ENCODE measurements at regions of chr4 and their contacts with region 1.

Region 1: DNA sequence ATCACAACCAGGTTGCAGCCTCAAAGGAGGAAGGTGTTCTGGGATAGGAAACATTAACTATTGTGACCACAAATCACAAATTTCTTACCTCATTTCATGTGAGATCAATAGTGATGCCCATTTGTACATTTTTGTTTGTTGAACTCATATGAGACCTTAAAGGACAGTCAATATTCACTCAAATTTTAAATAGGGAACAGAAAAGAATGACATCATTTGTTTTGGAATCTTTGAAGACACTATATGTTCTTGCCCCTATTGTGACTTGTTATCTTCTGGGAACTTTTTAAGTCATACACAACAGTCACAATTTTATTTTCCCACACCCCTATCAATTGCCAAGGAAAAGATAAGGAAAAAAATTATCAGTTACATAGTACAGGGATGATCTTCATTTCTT is 346.5 kb downstream of the ARAP2 start:
- DNase-seq: no peak
- ATAC-seq: peak; percentile 29; the same call in 2 of the 3 replicates
- H3K4me3 ChIP-seq: no peak overlapping the region
- H3K27ac ChIP-seq: no peak overlapping the region
- H3K4me1 ChIP-seq: no peaks in the 10 kb centered on the region
- H3K27me3 ChIP-seq: no peaks in the 10 kb centered on the region
- CTCF ChIP-seq: no peak
- EP300 ChIP-seq: no peak
- POLR2A ChIP-seq: no peak
- RAD21 ChIP-seq: no peak

Region 2: GRCh38 chr4:35884714-35885480 is 12.9 kb before region 1 on chr4:
- CTCF ChIA-PET with region 1: interaction called, 4 read pairs
- POLR2A ChIA-PET with region 1: no interaction called
- RAD21 ChIA-PET with region 1: no interaction called
- SMC1A ChIA-PET with region 1: interaction called, 21 read pairs
- in situ Hi-C with region 1: no loop called
- intact Hi-C with region 1: no loop called
- DNase-seq: no peak
- ATAC-seq: no peak
- H3K4me3 ChIP-seq: no peak overlapping the region
- H3K27ac ChIP-seq: no peak overlapping the region
- H3K4me1 ChIP-seq: no peaks in the 10 kb centered on the region
- H3K27me3 ChIP-seq: no peaks in the 10 kb centered on the region
- CTCF ChIP-seq: no peak
- EP300 ChIP-seq: no peak
- POLR2A ChIP-seq: no peak
- RAD21 ChIP-seq: no peak

Region 3: GRCh38 chr4:35925806-35926205 is 28.0 kb after region 1 on chr4:
- CTCF ChIA-PET with region 1: no interaction called
- POLR2A ChIA-PET with region 1: no interaction called
- RAD21 ChIA-PET with region 1: no interaction called
- SMC1A ChIA-PET with region 1: no interaction called
- in situ Hi-C with region 1: no loop called
- intact Hi-C with region 1: no loop called
- DNase-seq: no peak
- ATAC-seq: peak; percentile 95
- H3K4me3 ChIP-seq: no peak overlapping the region
- H3K27ac ChIP-seq: no peak overlapping the region
- H3K4me1 ChIP-seq: no peaks in the 10 kb centered on the region
- H3K27me3 ChIP-seq: no peaks in the 10 kb centered on the region
- CTCF ChIP-seq: no peak
- EP300 ChIP-seq: no peak
- POLR2A ChIP-seq: no peak
- RAD21 ChIP-seq: no peak